B cell (primary cell): ENCODE measurements at regions of chr9 and their contacts with region 1.

Region 1: GRCh38 chr9:137029058-137029936 is 1.3 kb upstream of the ABCA2 start:
- DNase-seq: peak; percentile 85
- ATAC-seq: peak; percentile 31
- H3K4me3 ChIP-seq: peak overlapping the region; percentile 4 to 77 (median 66)
- H3K4me3 Mint-ChIP-seq: peak overlapping the region; percentile 90
- H3K27ac ChIP-seq: peak overlapping the region in 1 of 2 donors; percentile 71
- H3K27ac Mint-ChIP-seq: peak overlapping the region; percentile 92
- H3K4me1 ChIP-seq: peaks cover 61 to 78% of the 10 kb centered on the region in 2 donors
- H3K4me1 Mint-ChIP-seq: peaks cover 66% of the 10 kb centered on the region
- H3K27me3 ChIP-seq: no peaks in the 10 kb centered on the region
- H3K27me3 Mint-ChIP-seq: no peaks in the 10 kb centered on the region
- CTCF ChIP-seq: peak; percentile 87

Region 2: DNA sequence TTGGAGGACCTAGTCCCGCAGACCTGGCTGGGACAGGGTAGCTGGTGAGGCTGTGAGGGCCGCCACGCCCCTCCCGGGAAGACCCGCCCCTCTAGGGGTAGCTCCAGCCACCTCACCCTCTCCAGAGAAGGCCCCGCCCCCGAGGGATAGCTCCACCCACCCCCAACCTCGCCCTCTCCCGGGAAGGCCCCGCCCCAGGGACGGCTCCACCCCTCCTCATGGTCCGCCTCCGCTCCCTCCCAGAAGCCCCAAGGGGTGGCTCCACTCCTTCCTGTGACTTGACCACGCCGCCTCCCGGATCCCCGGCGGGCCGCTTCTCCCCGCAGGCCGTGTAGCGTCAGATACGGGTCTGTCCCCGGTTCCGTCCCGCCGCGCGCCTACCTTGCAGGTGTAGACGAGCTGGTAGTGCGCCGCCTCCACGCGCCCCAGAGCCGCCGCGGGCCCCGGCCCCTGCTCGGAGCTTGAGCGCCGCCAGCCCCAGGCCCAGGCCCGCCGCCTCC is 666.1 kb before region 1 on chr9:
- CTCF ChIA-PET with region 1: no interaction called
- POLR2A ChIA-PET with region 1: no interaction called
- intact Hi-C with region 1: no loop called
- DNase-seq: peak; percentile 93
- ATAC-seq: peak; percentile 93
- H3K4me3 ChIP-seq: peak overlapping the region; percentile 3 to 97 (median 71)
- H3K4me3 Mint-ChIP-seq: peak overlapping the region; percentile 89
- H3K27ac ChIP-seq: peak overlapping the region; percentile 40 to 53
- H3K27ac Mint-ChIP-seq: peak overlapping the region; percentile 93
- H3K4me1 ChIP-seq: peaks cover 5 to 10% of the 10 kb centered on the region in 2 donors
- H3K4me1 Mint-ChIP-seq: peaks cover 10% of the 10 kb centered on the region
- H3K27me3 ChIP-seq: no peaks in the 10 kb centered on the region
- H3K27me3 Mint-ChIP-seq: no peaks in the 10 kb centered on the region
- CTCF ChIP-seq: no peak

Region 3: GRCh38 chr9:136849038-136849959 is 180.0 kb before region 1 on chr9 and contains the start of gene PHPT1:
- CTCF ChIA-PET with region 1: interaction called, 11 read pairs
- POLR2A ChIA-PET with region 1: no interaction called
- intact Hi-C with region 1: loop called (anchors 2 kb)
- DNase-seq: peak; percentile 99
- ATAC-seq: peak; percentile 94
- H3K4me3 ChIP-seq: peak within 1 kb of the TSS; percentile 53 to 87 (median 82)
- H3K4me3 Mint-ChIP-seq: peak within 1 kb of the TSS; percentile 96
- H3K27ac ChIP-seq: peak within 1 kb of the TSS in 1 of 2 donors; percentile 55
- H3K27ac Mint-ChIP-seq: peak within 1 kb of the TSS; percentile 94
- H3K4me1 ChIP-seq: peaks cover 33 to 38% of the 10 kb centered on the region in 2 donors
- H3K4me1 Mint-ChIP-seq: peaks cover 20% of the 10 kb centered on the region
- H3K27me3 ChIP-seq: peaks cover 0 to 28% (median 9%) of the 10 kb centered on the region in 4 experiments
- H3K27me3 Mint-ChIP-seq: peaks cover 7% of the 10 kb centered on the region
- CTCF ChIP-seq: no peak
- total RNA-seq, gene PHPT1: 33.1 and 36.5 TPM in 2 replicates

Region 4: DNA sequence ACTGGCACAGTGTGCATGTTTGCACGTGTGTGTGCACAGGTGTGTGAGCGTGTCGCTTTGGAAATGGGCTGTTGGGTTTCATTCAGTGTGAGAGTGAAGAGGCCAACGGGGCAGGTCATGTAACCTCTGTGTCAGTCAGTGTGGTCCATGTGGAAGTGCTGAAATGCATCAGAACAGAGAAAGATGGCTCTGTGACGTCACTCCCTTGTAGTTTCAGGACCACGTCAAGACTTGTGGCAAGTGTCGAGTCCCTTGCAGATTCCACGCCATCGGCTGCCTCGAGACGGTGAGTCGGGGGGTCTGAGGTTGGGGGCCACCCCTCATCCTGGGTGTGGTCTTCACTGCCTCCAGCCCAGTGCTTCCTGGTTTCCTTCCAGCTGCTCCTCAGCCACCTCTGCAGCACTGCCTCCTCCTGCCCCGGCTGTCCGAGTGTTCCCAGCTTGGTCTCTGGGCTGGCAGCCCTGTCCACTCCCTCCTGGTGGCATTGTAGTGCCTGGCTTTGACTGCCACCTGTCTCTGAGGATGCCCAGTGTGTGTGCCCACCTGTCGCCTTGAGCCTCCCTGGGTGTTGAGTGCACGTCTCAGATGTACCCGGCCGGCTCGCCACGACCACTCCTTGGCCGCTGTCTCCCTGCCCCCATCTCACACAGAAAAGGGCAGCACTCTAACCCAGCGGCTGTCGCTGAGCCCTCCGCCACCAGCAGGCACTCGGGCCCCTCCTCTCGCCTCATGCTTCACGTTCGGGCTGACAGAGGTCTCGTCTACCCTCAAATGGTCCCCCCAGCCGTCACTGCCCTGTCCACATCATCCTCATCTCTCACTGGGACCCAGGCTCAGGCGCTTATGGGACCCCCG is 112.7 kb before region 1 on chr9:
- CTCF ChIA-PET with region 1: no interaction called
- POLR2A ChIA-PET with region 1: no interaction called
- intact Hi-C with region 1: no loop called
- DNase-seq: no peak
- ATAC-seq: no peak
- H3K4me3 ChIP-seq: no peak overlapping the region
- H3K4me3 Mint-ChIP-seq: no peak overlapping the region
- H3K27ac ChIP-seq: no peak overlapping the region
- H3K27ac Mint-ChIP-seq: no peak overlapping the region
- H3K4me1 ChIP-seq: no peaks in the 10 kb centered on the region
- H3K4me1 Mint-ChIP-seq: no peaks in the 10 kb centered on the region
- H3K27me3 ChIP-seq: no peaks in the 10 kb centered on the region
- H3K27me3 Mint-ChIP-seq: no peaks in the 10 kb centered on the region
- CTCF ChIP-seq: no peak

Region 5: GRCh38 chr9:136949817-136950655 is 79.3 kb before region 1 on chr9:
- CTCF ChIA-PET with region 1: interaction called, 39 read pairs
- POLR2A ChIA-PET with region 1: interaction called, 6 read pairs
- intact Hi-C with region 1: loop called (anchors 1 kb)
- DNase-seq: peak; percentile 97
- ATAC-seq: peak; percentile 95
- H3K4me3 ChIP-seq: peak overlapping the region; percentile 44 to 65 (median 58)
- H3K4me3 Mint-ChIP-seq: peak overlapping the region; percentile 88
- H3K27ac ChIP-seq: peak overlapping the region; percentile 41 to 72
- H3K27ac Mint-ChIP-seq: peak overlapping the region; percentile 92
- H3K4me1 ChIP-seq: peaks cover 10 to 15% of the 10 kb centered on the region in 2 donors
- H3K4me1 Mint-ChIP-seq: peaks cover 8% of the 10 kb centered on the region
- H3K27me3 ChIP-seq: no peaks in the 10 kb centered on the region
- H3K27me3 Mint-ChIP-seq: no peaks in the 10 kb centered on the region
- CTCF ChIP-seq: peak; percentile 36

Region 6: GRCh38 chr9:137000177-137000883 is 29.0 kb before region 1 on chr9:
- CTCF ChIA-PET with region 1: interaction called, 25 read pairs
- POLR2A ChIA-PET with region 1: interaction called, 5 read pairs
- intact Hi-C with region 1: no loop called
- DNase-seq: peak; percentile 68
- ATAC-seq: peak; percentile 54
- H3K4me3 ChIP-seq: peak overlapping the region in 2 of 5 experiments; percentile 41 to 50
- H3K4me3 Mint-ChIP-seq: peak overlapping the region; percentile 81
- H3K27ac ChIP-seq: peak overlapping the region; percentile 4 to 74
- H3K27ac Mint-ChIP-seq: peak overlapping the region; percentile 87
- H3K4me1 ChIP-seq: peaks cover 46 to 58% of the 10 kb centered on the region in 2 donors
- H3K4me1 Mint-ChIP-seq: peaks cover 44% of the 10 kb centered on the region
- H3K27me3 ChIP-seq: peaks cover 0 to 4% (median 0%) of the 10 kb centered on the region in 4 experiments
- H3K27me3 Mint-ChIP-seq: peaks cover 3% of the 10 kb centered on the region
- CTCF ChIP-seq: no peak

Region 7: DNA sequence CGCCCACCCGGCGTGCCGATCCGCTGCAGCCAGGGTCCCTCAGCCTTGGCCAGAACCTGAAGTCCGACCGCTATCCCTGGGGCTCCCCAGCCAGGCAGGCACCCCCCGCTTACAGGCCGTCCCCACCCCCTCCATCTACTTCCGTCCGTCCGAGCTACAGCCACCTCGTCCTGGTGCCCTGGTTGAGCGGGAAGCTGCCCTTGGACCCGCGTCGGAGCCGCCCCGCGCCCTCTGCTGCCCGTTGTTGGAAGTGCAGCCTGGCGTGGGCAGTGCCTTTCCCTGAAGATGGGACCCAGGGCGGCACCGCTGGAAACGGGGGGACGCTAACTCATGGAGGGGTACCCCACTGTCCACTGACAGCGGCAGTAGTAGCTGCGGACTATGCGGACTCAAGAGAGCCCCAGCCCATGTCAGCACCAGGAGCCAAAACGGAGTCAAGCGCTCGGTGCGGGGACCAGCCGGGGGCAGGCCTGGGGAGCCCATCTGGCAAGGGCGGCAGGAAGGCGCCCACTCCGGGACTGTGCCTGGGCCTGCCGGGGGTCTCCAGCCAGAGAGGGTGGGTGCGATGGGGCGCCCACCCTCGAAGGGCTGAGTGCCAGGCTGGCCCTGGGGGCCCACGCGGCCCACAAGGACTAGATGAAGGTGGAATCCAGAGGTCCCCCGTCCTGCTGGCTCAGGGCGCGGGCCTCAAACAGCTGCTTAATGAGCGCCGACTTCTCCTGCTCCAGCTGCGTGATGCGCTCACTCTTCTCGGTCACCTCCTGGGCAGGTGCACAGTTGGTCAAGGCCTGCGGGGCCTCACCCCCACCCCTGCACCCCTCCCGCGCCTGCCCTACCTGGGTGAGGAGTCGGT is 35.0 kb after region 1 on chr9:
- CTCF ChIA-PET with region 1: interaction called, 49 read pairs
- POLR2A ChIA-PET with region 1: interaction called, 3 read pairs
- intact Hi-C with region 1: no loop called
- DNase-seq: peak; percentile 70
- ATAC-seq: peak; percentile 32
- H3K4me3 ChIP-seq: no peak overlapping the region
- H3K4me3 Mint-ChIP-seq: no peak overlapping the region
- H3K27ac ChIP-seq: no peak overlapping the region
- H3K27ac Mint-ChIP-seq: peak overlapping the region; percentile 46
- H3K4me1 ChIP-seq: peaks cover 5 to 19% of the 10 kb centered on the region in 2 donors
- H3K4me1 Mint-ChIP-seq: peaks cover 8% of the 10 kb centered on the region
- H3K27me3 ChIP-seq: peaks cover 0 to 11% (median under 1%) of the 10 kb centered on the region in 4 experiments
- H3K27me3 Mint-ChIP-seq: peaks cover 6% of the 10 kb centered on the region
- CTCF ChIP-seq: peak; percentile 86

Region 8: GRCh38 chr9:137103206-137103999 is 74.1 kb after region 1 on chr9:
- CTCF ChIA-PET with region 1: no interaction called
- POLR2A ChIA-PET with region 1: no interaction called
- intact Hi-C with region 1: no loop called
- DNase-seq: no peak
- ATAC-seq: no peak
- H3K4me3 ChIP-seq: no peak overlapping the region
- H3K4me3 Mint-ChIP-seq: no peak overlapping the region
- H3K27ac ChIP-seq: no peak overlapping the region
- H3K27ac Mint-ChIP-seq: no peak overlapping the region
- H3K4me1 ChIP-seq: no peaks in the 10 kb centered on the region
- H3K4me1 Mint-ChIP-seq: no peaks in the 10 kb centered on the region
- H3K27me3 ChIP-seq: no peaks in the 10 kb centered on the region
- H3K27me3 Mint-ChIP-seq: no peaks in the 10 kb centered on the region
- CTCF ChIP-seq: no peak

Region 9: GRCh38 chr9:137461663-137462395 is 432.5 kb after region 1 on chr9:
- CTCF ChIA-PET with region 1: no interaction called
- POLR2A ChIA-PET with region 1: no interaction called
- intact Hi-C with region 1: no loop called
- DNase-seq: peak; percentile 95
- ATAC-seq: peak; percentile 66
- H3K4me3 ChIP-seq: peak overlapping the region in 4 of 5 experiments; percentile 37 to 56 (median 48)
- H3K4me3 Mint-ChIP-seq: peak overlapping the region; percentile 79
- H3K27ac ChIP-seq: peak overlapping the region; percentile 84 to 89
- H3K27ac Mint-ChIP-seq: peak overlapping the region; percentile 88
- H3K4me1 ChIP-seq: peaks cover 39 to 44% of the 10 kb centered on the region in 2 donors
- H3K4me1 Mint-ChIP-seq: peaks cover 21% of the 10 kb centered on the region
- H3K27me3 ChIP-seq: no peaks in the 10 kb centered on the region
- H3K27me3 Mint-ChIP-seq: no peaks in the 10 kb centered on the region
- CTCF ChIP-seq: no peak